Mammary epithelial cell (primary cell): ENCODE measurements at regions of chr6 and their contacts with region 1.

Region 1: GRCh38 chr6:149431905-149432775 is 32.1 kb downstream of the SUMO4 start:
- DNase-seq: peak; percentile 65
- H3K4me3 ChIP-seq: peak overlapping the region in 1 of 3 experiments; percentile 17
- H3K27ac ChIP-seq: no peak overlapping the region
- H3K4me1 ChIP-seq: no peaks in the 10 kb centered on the region
- H3K27me3 ChIP-seq: no peaks in the 10 kb centered on the region
- CTCF ChIP-seq: peak; percentile 82 to 89

Region 2: DNA sequence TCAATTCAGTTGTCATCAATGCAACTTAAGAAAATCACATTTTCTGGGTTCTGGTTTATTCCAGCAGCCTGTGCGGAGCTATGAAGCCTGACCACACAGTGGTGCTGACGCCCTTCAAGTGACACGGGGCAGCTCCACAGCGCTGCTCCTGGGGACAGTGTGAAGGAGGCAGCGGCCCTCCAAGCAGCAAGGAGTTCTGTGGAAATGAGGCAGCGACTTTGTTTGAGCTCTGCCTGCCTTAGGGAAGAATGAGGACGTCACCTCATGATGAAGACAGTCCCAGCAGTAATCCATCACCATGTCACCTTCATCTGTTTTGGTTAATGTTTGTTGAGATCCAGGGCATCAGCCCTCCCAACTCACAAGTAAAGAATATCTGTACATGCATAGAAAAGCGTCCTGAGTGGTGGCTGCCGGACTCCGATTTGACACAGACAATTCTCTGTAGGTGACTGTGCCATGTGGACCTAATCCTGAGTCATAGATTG is 853.9 kb before region 1 on chr6:
- CTCF ChIA-PET with region 1: no interaction called
- dilution Hi-C with region 1: no loop called
- in situ Hi-C with region 1: loop called (anchors 25 kb)
- intact Hi-C with region 1: loop called (anchors 5 kb)
- DNase-seq: peak; percentile 53
- H3K4me3 ChIP-seq: no peak overlapping the region
- H3K27ac ChIP-seq: no peak overlapping the region
- H3K4me1 ChIP-seq: no peaks in the 10 kb centered on the region
- H3K27me3 ChIP-seq: no peaks in the 10 kb centered on the region
- CTCF ChIP-seq: peak; percentile 64 to 95

Region 3: GRCh38 chr6:149190224-149190831 is 241.8 kb before region 1 on chr6:
- CTCF ChIA-PET with region 1: no interaction called
- dilution Hi-C with region 1: no loop called
- in situ Hi-C with region 1: loop called in 1 of 2 experiments (anchors 10 kb)
- intact Hi-C with region 1: loop called (anchors 1 kb)
- DNase-seq: peak; percentile 57
- H3K4me3 ChIP-seq: no peak overlapping the region
- H3K27ac ChIP-seq: no peak overlapping the region
- H3K4me1 ChIP-seq: no peaks in the 10 kb centered on the region
- H3K27me3 ChIP-seq: no peaks in the 10 kb centered on the region
- CTCF ChIP-seq: peak; percentile 40 to 59

Region 4: DNA sequence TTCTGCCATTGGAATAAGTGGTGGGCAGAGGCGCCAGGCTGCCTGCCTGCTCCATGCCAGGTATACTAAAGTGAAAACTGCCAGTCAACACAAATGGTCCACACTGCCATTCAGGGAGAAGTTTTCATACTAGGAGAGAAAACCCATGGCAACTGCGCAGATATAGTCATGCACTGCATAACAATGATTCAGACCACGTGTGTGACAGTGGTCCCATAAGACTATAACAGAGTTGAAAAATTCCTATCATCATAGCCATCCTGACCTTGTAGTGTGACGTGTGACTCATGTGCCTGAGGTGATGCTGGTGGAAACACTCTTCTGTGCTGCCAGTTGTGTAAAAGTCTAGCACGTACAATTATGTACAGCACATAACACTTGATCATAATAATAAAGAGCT is 27.6 kb after region 1 on chr6:
- CTCF ChIA-PET with region 1: no interaction called
- dilution Hi-C with region 1: no loop called
- in situ Hi-C with region 1: no loop called
- intact Hi-C with region 1: no loop called
- DNase-seq: no peak
- H3K4me3 ChIP-seq: no peak overlapping the region
- H3K27ac ChIP-seq: no peak overlapping the region
- H3K4me1 ChIP-seq: peaks cover 1% of the 10 kb centered on the region
- H3K27me3 ChIP-seq: no peaks in the 10 kb centered on the region
- CTCF ChIP-seq: no peak

Region 5: DNA sequence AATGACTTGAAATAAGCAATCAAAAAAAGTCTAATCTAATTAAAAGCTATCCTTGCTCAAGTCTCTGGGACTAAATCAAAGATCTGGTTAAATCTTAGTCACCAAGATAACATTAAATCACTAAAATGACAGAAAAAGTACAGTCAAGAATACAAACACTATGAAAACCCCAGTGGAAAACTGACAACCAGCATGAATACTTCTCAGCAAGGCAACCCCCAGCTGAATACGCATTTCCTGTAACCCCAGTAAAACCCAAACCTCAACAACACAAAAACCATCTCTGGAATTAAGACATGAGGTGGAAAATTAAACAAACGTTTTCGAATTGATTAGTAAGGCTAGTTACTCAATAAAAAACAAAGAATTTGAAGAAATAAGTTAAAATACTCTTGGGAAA is 76.3 kb after region 1 on chr6:
- CTCF ChIA-PET with region 1: no interaction called
- dilution Hi-C with region 1: loop called (anchors 5 kb)
- in situ Hi-C with region 1: no loop called
- intact Hi-C with region 1: no loop called
- DNase-seq: no peak
- H3K4me3 ChIP-seq: no peak overlapping the region
- H3K27ac ChIP-seq: no peak overlapping the region
- H3K4me1 ChIP-seq: no peaks in the 10 kb centered on the region
- H3K27me3 ChIP-seq: no peaks in the 10 kb centered on the region
- CTCF ChIP-seq: no peak